Gastrocnemius medialis (tissue), 4 donors: ENCODE measurements at regions of chr6 and their contacts with region 1.

Region 1: DNA sequence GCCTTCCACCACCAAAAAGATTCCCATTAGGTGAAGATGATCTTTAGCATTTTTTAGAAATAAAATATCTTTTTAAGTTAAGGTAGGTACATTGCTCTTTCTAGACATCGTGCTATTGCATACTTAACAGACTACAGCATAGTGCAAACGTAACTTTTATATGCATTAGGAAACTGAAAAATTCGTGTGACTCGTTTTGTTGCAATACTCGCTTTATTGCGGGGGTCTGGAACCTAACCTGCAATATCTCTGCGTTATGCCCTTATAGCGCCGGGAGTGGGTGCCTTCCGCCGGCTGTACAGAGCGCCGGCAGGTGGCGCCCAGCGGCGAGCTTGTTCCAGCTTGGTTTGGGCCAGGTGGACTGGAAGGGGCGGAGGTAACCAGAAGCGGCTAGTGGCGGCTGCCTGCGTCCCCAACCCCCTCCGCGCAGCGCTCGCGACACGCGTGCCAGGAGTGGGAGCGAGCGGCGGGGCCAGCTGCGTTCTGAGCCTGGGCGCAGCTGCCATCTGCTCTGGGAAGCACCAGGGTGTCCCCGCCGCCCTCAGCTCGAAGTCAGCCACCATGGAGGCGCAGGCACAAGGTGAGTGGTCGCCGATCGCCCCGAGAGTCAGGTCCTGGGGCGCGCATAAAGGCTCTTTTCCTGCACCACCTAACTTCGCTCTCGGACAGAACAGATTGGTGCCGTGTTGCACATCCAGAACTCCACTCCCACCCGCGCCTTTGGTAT is at the start of gene TPD52L1:
- DNase-seq: peak; percentile 88 to 93
- ATAC-seq: peak; percentile 71 to 73
- H3K4me3 ChIP-seq: peak within 1 kb of the TSS; percentile 65 to 93 (median 86)
- H3K27ac ChIP-seq: peak within 1 kb of the TSS; percentile 89 to 94 (median 94)
- H3K4me1 ChIP-seq: peaks cover 37 to 45% of the 10 kb centered on the region in 2 donors
- H3K27me3 ChIP-seq: no peaks in the 10 kb centered on the region
- CTCF ChIP-seq: peak; percentile 89 to 95 (median 92)
- POLR2A ChIP-seq: peak; percentile 71 to 77
- total RNA-seq, gene TPD52L1: 47.6 to 152 (median 123) TPM

Region 2: GRCh38 chr6:125013938-125014660 is 139.5 kb before region 1 on chr6:
- in situ Hi-C with region 1: no loop called
- intact Hi-C with region 1: no loop called
- DNase-seq: no peak
- ATAC-seq: no peak
- H3K4me3 ChIP-seq: no peak overlapping the region
- H3K27ac ChIP-seq: no peak overlapping the region
- H3K4me1 ChIP-seq: peaks cover 10 to 15% of the 10 kb centered on the region in 2 donors
- H3K27me3 ChIP-seq: no peaks in the 10 kb centered on the region
- CTCF ChIP-seq: no peak
- POLR2A ChIP-seq: no peak

Region 3: GRCh38 chr6:125078602-125079321 is 74.8 kb before region 1 on chr6:
- in situ Hi-C with region 1: no loop called
- intact Hi-C with region 1: no loop called
- DNase-seq: no peak
- ATAC-seq: no peak
- H3K4me3 ChIP-seq: no peak overlapping the region
- H3K27ac ChIP-seq: no peak overlapping the region
- H3K4me1 ChIP-seq: peaks cover 0 to 3% of the 10 kb centered on the region in 2 donors
- H3K27me3 ChIP-seq: no peaks in the 10 kb centered on the region
- CTCF ChIP-seq: no peak
- POLR2A ChIP-seq: no peak

Region 4: DNA sequence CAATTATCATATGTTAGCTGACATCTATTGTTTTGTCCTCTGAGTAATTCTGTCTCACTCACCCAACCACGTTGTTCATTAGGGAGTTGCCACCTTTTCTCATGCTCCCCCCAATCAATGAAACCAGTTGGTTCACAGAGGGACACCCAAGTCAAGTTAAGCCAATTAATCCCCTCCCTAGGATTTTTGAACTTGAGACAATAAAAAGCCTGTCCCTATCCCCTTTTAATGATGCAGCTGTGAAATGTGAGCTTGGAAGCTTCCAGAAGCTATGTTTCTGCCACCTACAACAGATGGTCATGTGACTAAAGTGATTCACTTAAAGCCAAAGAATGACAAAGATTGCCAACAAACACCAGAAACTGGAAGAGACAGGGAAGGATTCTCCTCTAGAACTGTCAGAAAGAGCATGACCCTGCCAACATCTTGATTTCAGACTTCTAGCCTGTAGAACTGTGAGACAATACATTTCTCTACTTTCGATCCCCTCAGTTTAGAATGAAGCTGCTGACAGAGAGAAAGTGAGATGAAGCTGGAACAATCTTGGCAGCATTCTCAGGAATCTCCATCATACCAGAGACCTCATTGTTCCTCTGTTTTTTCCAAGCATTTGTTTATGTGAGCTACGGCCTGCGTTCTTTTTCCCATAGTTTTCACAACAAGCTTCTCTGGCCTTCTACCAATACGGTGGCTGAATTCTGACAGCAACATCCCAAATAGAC is 57.8 kb before region 1 on chr6:
- in situ Hi-C with region 1: no loop called
- intact Hi-C with region 1: no loop called
- DNase-seq: no peak
- ATAC-seq: no peak
- H3K4me3 ChIP-seq: no peak overlapping the region
- H3K27ac ChIP-seq: no peak overlapping the region
- H3K4me1 ChIP-seq: no peaks in the 10 kb centered on the region
- H3K27me3 ChIP-seq: no peaks in the 10 kb centered on the region
- CTCF ChIP-seq: no peak
- POLR2A ChIP-seq: no peak

Region 5: GRCh38 chr6:125191916-125192609 is 38.5 kb after region 1 on chr6:
- in situ Hi-C with region 1: no loop called
- intact Hi-C with region 1: loop called (anchors 2 kb)
- DNase-seq: peak in 1 of 2 donors; percentile 77
- ATAC-seq: peak; percentile 21 to 68
- H3K4me3 ChIP-seq: no peak overlapping the region
- H3K27ac ChIP-seq: peak overlapping the region; percentile 90 to 94 (median 92)
- H3K4me1 ChIP-seq: peaks cover 96 to 100% of the 10 kb centered on the region in 2 donors
- H3K27me3 ChIP-seq: no peaks in the 10 kb centered on the region
- CTCF ChIP-seq: peak; percentile 54 to 75 (median 62)
- POLR2A ChIP-seq: no peak

Region 6: GRCh38 chr6:125213939-125214338 is 60.4 kb after region 1 on chr6:
- in situ Hi-C with region 1: no loop called
- intact Hi-C with region 1: loop called (anchors 2 kb)
- DNase-seq: peak in 1 of 2 donors; percentile 72
- ATAC-seq: peak; percentile 61 to 89
- H3K4me3 ChIP-seq: peak overlapping the region in 2 of 4 donors; percentile 11 to 12
- H3K27ac ChIP-seq: peak overlapping the region; percentile 72 to 90 (median 78)
- H3K4me1 ChIP-seq: peaks cover 63 to 67% of the 10 kb centered on the region in 2 donors
- H3K27me3 ChIP-seq: no peaks in the 10 kb centered on the region
- CTCF ChIP-seq: no peak
- POLR2A ChIP-seq: peak in 1 of 2 donors; percentile 58

Region 7: DNA sequence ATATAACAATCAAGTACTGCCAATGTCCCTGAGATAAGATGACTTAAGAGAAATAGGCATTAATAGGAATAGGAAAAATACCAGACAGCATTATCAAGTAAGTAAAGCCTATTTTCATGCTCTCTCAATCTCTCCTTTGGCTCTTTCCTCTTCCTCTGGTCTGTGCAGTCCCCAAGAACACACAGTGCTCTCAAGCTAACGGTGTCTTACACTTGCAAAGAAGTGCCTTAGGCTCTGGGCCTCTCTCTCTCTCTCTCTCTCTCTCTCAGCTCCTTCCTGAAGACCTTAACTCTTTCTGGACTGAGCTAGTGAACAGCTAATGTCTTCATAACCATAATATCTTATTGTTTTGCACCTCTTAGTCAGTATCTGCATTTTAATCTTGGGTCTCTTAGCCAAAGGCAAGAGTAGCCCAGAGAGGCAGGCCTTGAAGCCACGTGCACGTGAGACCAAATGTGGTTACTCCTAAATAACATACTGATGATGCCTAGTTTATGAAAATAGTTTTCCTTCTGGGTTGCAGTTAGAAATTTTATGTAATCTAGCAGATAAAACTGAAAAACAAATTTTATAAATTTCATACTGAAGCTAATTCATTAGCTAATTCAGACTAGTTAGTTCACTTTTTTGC is 70.8 kb after region 1 on chr6:
- in situ Hi-C with region 1: no loop called
- intact Hi-C with region 1: no loop called
- DNase-seq: no peak
- ATAC-seq: no peak
- H3K4me3 ChIP-seq: no peak overlapping the region
- H3K27ac ChIP-seq: peak overlapping the region; percentile 20 to 86 (median 72)
- H3K4me1 ChIP-seq: peaks cover 63 to 69% of the 10 kb centered on the region in 2 donors
- H3K27me3 ChIP-seq: no peaks in the 10 kb centered on the region
- CTCF ChIP-seq: no peak
- POLR2A ChIP-seq: no peak

Region 8: DNA sequence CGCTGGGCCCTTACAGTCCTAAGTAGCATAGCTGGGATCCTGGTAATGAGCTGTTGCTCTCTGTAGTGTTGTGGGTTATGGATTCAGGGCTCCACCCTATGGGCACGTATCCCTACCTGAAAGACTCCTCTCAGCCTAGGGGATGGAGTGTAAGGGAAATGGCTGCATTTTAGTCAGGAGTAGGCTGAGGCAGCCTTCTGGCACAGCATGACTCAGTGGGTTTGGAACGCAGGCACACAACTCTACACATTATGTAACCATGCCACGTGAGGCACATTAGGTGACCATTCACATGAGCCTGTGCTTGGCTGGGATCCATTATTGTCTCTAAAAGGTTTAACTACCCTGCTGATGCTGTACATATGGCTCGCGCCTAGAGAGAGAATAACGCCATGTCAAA is 120.4 kb after region 1 on chr6:
- in situ Hi-C with region 1: loop called in 1 of 4 experiments (anchors 25 kb)
- intact Hi-C with region 1: no loop called
- DNase-seq: peak in 1 of 2 donors; percentile 29
- ATAC-seq: peak; percentile 31 to 67
- H3K4me3 ChIP-seq: no peak overlapping the region
- H3K27ac ChIP-seq: peak overlapping the region in 3 of 4 donors; percentile 1 to 43 (median 24)
- H3K4me1 ChIP-seq: peaks cover 18 to 27% of the 10 kb centered on the region in 2 donors
- H3K27me3 ChIP-seq: no peaks in the 10 kb centered on the region
- CTCF ChIP-seq: no peak
- POLR2A ChIP-seq: no peak

Region 9: GRCh38 chr6:125301435-125302391 is 148.2 kb after region 1 on chr6 and contains the start of gene HDDC2:
- in situ Hi-C with region 1: loop called in 3 of 4 experiments (anchors 5 to 10 kb)
- intact Hi-C with region 1: loop called (anchors 2 kb)
- DNase-seq: peak; percentile 43 to 64
- ATAC-seq: peak; percentile 76 to 78
- H3K4me3 ChIP-seq: peak within 1 kb of the TSS; percentile 72 to 90 (median 78)
- H3K27ac ChIP-seq: peak within 1 kb of the TSS; percentile 84 to 96 (median 93)
- H3K4me1 ChIP-seq: peaks cover 21 to 33% of the 10 kb centered on the region in 2 donors
- H3K27me3 ChIP-seq: no peaks in the 10 kb centered on the region
- CTCF ChIP-seq: peak in 1 of 5 experiments; percentile 23
- POLR2A ChIP-seq: peak; percentile 44 to 58
- total RNA-seq, gene HDDC2: 54.9 to 88.3 (median 77.7) TPM

Region 10: DNA sequence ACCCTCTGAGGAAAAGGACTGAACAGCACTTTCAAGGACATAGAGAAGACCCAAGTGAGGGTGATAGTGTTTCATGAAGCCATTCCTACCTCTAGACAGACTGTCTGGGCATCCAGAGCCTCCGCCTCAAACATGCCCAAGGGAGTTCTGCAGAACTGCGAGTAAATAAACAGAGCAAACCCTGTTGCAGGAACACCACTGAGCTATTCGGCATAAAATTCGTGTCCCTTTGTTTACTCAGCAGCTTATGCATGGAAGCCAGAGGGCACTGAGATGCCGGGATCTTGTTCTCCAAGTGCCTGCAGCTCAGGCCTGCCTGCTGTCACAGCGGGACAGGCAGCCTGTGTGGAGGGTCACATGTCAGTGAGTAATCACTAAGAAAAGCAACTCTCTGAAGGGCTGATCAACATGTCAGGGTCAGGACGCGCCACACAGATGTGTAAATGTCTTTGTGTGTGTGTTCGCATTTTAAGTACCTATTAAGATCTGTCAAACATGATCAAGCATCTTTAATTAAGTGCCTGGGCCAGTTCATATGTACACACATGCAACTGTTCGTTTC is 431.0 kb after region 1 on chr6:
- in situ Hi-C with region 1: no loop called
- intact Hi-C with region 1: loop called (anchors 10 kb)
- DNase-seq: peak; percentile 83 to 88
- ATAC-seq: peak; percentile 97 to 98
- H3K4me3 ChIP-seq: peak overlapping the region in 2 of 4 donors; percentile 12 to 25
- H3K27ac ChIP-seq: peak overlapping the region; percentile 84 to 88 (median 87)
- H3K4me1 ChIP-seq: peaks cover 14 to 17% of the 10 kb centered on the region in 2 donors
- H3K27me3 ChIP-seq: no peaks in the 10 kb centered on the region
- CTCF ChIP-seq: peak; percentile 34 to 62 (median 44)
- POLR2A ChIP-seq: peak in 1 of 2 donors; percentile 34

Region 11: DNA sequence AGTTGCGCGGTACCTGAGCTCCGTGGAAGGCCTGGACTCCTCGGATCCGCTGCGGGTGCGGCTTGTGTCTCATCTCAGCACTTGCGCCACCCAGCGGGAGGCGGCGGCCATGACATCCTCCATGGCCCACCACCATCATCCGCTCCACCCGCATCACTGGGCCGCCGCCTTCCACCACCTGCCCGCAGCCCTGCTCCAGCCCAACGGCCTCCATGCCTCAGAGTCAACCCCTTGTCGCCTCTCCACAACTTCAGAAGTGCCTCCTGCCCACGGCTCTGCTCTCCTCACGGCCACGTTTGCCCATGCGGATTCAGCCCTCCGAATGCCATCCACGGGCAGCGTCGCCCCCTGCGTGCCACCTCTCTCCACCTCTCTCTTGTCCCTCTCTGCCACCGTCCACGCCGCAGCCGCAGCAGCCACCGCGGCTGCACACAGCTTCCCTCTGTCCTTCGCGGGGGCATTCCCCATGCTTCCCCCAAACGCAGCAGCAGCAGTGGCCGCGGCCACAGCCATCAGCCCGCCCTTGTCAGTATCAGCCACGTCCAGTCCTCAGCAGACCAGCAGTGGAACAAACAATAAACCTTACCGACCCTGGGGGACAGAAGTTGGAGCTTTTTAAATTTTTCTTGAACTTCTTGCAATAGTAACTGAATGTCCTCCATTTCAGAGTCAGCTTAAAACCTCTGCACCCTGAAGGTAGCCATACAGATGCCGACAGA is 605.8 kb after region 1 on chr6:
- in situ Hi-C with region 1: loop called (anchors 10 to 25 kb)
- intact Hi-C with region 1: no loop called
- DNase-seq: no peak
- ATAC-seq: no peak
- H3K4me3 ChIP-seq: no peak overlapping the region
- H3K27ac ChIP-seq: peak overlapping the region in 1 of 4 donors; percentile 35
- H3K4me1 ChIP-seq: peaks cover 0 to 4% of the 10 kb centered on the region in 2 donors
- H3K27me3 ChIP-seq: no peaks in the 10 kb centered on the region
- CTCF ChIP-seq: no peak
- POLR2A ChIP-seq: no peak